ENCODE measurements at regions of chr5 and their contacts with region 1.

Region 1: GRCh38 chr5:69414885-69415583 is at the start of gene MARVELD2:
- DNase-seq: peak; percentile 91
- H3K4me3 Mint-ChIP-seq: peak within 1 kb of the TSS; percentile 87
- H3K27ac Mint-ChIP-seq: peak within 1 kb of the TSS; percentile 90
- H3K4me1 Mint-ChIP-seq: peaks cover 16% of the 10 kb centered on the region
- H3K27me3 Mint-ChIP-seq: no peaks in the 10 kb centered on the region
- CTCF ChIP-seq: peak; percentile 50
- total RNA-seq, gene MARVELD2: 19.4 and 21.8 TPM in 2 replicates

Region 2: GRCh38 chr5:69343083-69343482 is 72.0 kb before region 1 on chr5:
- CTCF ChIA-PET with region 1: no interaction called
- POLR2A ChIA-PET with region 1: no interaction called
- intact Hi-C with region 1: no loop called
- DNase-seq: no peak
- H3K4me3 Mint-ChIP-seq: no peak overlapping the region
- H3K27ac Mint-ChIP-seq: no peak overlapping the region
- H3K4me1 Mint-ChIP-seq: no peaks in the 10 kb centered on the region
- H3K27me3 Mint-ChIP-seq: no peaks in the 10 kb centered on the region
- CTCF ChIP-seq: no peak

Region 3: DNA sequence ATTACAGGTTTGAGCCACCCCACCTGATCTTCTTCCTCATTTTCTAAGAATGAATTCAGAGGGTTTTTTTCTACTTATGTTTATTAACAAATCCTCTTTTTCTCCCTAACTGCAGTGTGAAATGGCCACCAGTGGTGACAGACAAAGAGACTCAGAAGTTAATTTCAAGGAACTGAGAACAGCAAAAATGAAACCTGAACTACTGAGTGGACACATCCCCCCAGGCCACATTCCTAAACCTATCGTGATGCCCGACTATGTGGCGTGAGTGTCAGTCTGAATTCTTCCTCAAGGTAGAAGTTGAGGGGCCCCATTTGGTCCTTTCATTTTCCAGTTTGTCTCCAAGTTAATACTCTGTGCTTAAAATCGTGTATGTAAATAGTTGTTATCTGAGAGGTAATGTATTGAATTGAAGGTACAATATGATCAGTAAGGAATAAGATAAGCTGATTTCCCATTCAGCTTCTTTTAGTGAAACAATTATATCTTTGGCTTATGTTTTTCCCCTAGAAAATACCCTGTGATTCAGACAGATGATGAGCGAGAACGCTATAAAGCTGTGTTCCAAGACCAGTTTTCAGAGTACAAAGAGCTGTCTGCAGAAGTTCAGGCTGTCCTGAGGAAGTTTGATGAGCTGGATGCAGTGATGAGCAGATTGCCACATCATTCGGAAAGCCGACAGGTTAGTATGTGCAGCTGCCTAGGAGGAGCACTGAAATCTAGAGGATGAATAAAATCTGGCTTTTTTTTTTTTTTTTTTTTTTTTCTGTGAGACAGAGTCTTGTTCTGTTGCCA is 17.6 kb after region 1 on chr5:
- CTCF ChIA-PET with region 1: interaction called, 6 read pairs
- POLR2A ChIA-PET with region 1: interaction called, 11 read pairs
- intact Hi-C with region 1: no loop called
- DNase-seq: no peak
- H3K4me3 Mint-ChIP-seq: no peak overlapping the region
- H3K27ac Mint-ChIP-seq: no peak overlapping the region
- H3K4me1 Mint-ChIP-seq: no peaks in the 10 kb centered on the region
- H3K27me3 Mint-ChIP-seq: no peaks in the 10 kb centered on the region
- CTCF ChIP-seq: no peak

Measured in MCF 10A (cell line).